CD4-positive, alpha-beta T cell (primary cell): ENCODE measurements at regions of chr15 and their contacts with region 1.

Region 1: GRCh38 chr15:85707519-85708338 is 87.0 kb downstream of the KLHL25 start:
- DNase-seq: peak in 2 of 14 experiments; percentile 56 to 80
- ATAC-seq: peak; percentile 39
- H3K4me3 ChIP-seq: peak overlapping the region; percentile 45
- H3K4me3 Mint-ChIP-seq: peak overlapping the region; percentile 75
- H3K27ac ChIP-seq: peak overlapping the region; percentile 80 to 88
- H3K27ac Mint-ChIP-seq: peak overlapping the region; percentile 98
- H3K4me1 ChIP-seq: peaks cover 54% of the 10 kb centered on the region
- H3K4me1 Mint-ChIP-seq: peaks cover 87% of the 10 kb centered on the region
- H3K27me3 ChIP-seq: no peaks in the 10 kb centered on the region
- H3K27me3 Mint-ChIP-seq: no peaks in the 10 kb centered on the region
- CTCF ChIP-seq: no peak

Region 2: DNA sequence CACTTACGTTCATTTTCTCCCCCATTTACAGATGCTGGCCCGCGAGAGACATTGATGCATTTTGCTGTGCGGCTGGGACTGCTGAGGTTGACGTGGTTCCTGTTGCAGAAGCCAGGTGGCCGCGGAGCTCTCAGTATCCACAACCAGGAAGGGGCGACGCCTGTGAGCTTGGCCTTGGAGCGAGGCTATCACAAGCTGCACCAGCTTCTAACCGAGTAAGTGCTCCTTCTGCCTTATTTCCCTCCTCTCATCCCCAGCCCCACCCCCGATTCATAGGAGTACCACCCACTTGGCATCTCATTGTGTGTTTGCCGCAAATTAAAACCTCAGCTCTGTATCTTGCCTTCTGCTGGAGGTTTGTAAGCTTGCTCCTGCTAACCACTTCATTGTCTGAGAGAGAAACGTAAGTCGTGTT is 164.0 kb before region 1 on chr15:
- CTCF ChIA-PET with region 1: no interaction called
- POLR2A ChIA-PET with region 1: no interaction called
- intact Hi-C with region 1: loop called in 1 of 2 experiments (anchors 5 kb)
- DNase-seq: peak in 13 of 14 experiments; percentile 5 to 72 (median 37)
- ATAC-seq: peak; percentile 90
- H3K4me3 ChIP-seq: peak overlapping the region; percentile 18
- H3K4me3 Mint-ChIP-seq: peak overlapping the region; percentile 52
- H3K27ac ChIP-seq: no peak overlapping the region
- H3K27ac Mint-ChIP-seq: peak overlapping the region; percentile 77
- H3K4me1 ChIP-seq: peaks cover 14% of the 10 kb centered on the region
- H3K4me1 Mint-ChIP-seq: peaks cover 82% of the 10 kb centered on the region
- H3K27me3 ChIP-seq: no peaks in the 10 kb centered on the region
- H3K27me3 Mint-ChIP-seq: no peaks in the 10 kb centered on the region
- CTCF ChIP-seq: peak; percentile 19

Region 3: GRCh38 chr15:85625856-85626255 is 81.9 kb before region 1 on chr15:
- CTCF ChIA-PET with region 1: no interaction called
- POLR2A ChIA-PET with region 1: interaction called, 5 read pairs
- intact Hi-C with region 1: loop called in 1 of 2 experiments (anchors 5 kb)
- DNase-seq: peak in 4 of 14 experiments; percentile 27 to 84 (median 68)
- ATAC-seq: peak; percentile 75
- H3K4me3 ChIP-seq: no peak overlapping the region
- H3K4me3 Mint-ChIP-seq: peak overlapping the region; percentile 49
- H3K27ac ChIP-seq: peak overlapping the region; percentile 5 to 25
- H3K27ac Mint-ChIP-seq: peak overlapping the region; percentile 79
- H3K4me1 ChIP-seq: peaks cover 36% of the 10 kb centered on the region
- H3K4me1 Mint-ChIP-seq: peaks cover 81% of the 10 kb centered on the region
- H3K27me3 ChIP-seq: no peaks in the 10 kb centered on the region
- H3K27me3 Mint-ChIP-seq: no peaks in the 10 kb centered on the region
- CTCF ChIP-seq: no peak

Region 4: GRCh38 chr15:85750319-85750806 is 42.6 kb after region 1 on chr15:
- CTCF ChIA-PET with region 1: no interaction called
- POLR2A ChIA-PET with region 1: no interaction called
- intact Hi-C with region 1: no loop called
- DNase-seq: peak in 1 of 14 experiments; percentile 32
- ATAC-seq: peak; percentile 21
- H3K4me3 ChIP-seq: no peak overlapping the region
- H3K4me3 Mint-ChIP-seq: no peak overlapping the region
- H3K27ac ChIP-seq: no peak overlapping the region
- H3K27ac Mint-ChIP-seq: peak overlapping the region; percentile 42
- H3K4me1 ChIP-seq: peaks cover 24% of the 10 kb centered on the region
- H3K4me1 Mint-ChIP-seq: peaks cover 44% of the 10 kb centered on the region
- H3K27me3 ChIP-seq: no peaks in the 10 kb centered on the region
- H3K27me3 Mint-ChIP-seq: no peaks in the 10 kb centered on the region
- CTCF ChIP-seq: no peak